Dendritic cell treated with granulocyte-macrophage colony-stimulating factor and Interleukin-4, amounts not matched to agents 40 ng/mL and 50 ng/mL, for 4 days (primary cell): ENCODE measurements at regions of chr14 and their contacts with region 1.

Region 1: DNA sequence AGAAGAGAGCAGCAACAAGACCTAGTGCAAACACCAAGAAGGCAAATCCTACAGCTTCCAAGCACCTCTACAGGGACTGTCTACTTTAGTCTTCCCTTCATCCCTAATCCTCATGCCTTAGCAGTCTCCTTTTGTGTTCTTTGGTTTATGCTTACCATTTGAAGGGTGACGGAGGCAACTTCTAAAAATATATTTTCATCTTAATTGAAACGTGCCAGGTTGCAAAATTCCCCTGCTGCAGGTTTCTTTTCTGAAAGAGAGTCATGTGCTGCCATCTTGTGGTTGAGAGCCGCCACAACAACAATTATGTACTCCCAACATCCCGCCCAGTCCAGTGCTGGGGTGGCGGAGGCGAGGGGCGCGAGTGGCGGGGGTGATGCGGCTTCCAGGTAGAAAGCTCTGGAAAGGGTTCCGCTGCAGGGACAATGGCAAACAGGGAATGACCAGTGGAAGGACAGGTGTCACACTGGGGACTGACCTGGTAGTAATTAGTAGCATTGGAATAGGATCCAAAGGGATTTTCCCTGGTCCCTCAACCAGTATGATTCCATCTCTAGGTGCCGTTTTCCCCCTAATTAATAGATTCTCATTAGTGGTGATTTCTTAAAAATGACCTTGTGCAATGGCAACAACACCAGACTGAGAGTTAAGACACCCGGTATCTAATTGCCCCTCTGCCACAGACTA is 80.3 kb upstream of the GNG2 start:
- H3K4me3 Mint-ChIP-seq: no peak overlapping the region
- H3K27ac Mint-ChIP-seq: no peak overlapping the region
- H3K4me1 Mint-ChIP-seq: peaks cover 24% of the 10 kb centered on the region
- H3K27me3 Mint-ChIP-seq: peaks cover 20% of the 10 kb centered on the region

Region 2: GRCh38 chr14:51283402-51284085 is 496.6 kb before region 1 on chr14:
- intact Hi-C with region 1: loop called (anchors 1 kb)
- H3K4me3 Mint-ChIP-seq: no peak overlapping the region
- H3K27ac Mint-ChIP-seq: no peak overlapping the region
- H3K4me1 Mint-ChIP-seq: no peaks in the 10 kb centered on the region
- H3K27me3 Mint-ChIP-seq: no peaks in the 10 kb centered on the region

Region 3: GRCh38 chr14:51369814-51370213 is 410.3 kb before region 1 on chr14:
- intact Hi-C with region 1: loop called (anchors 2 kb)
- H3K4me3 Mint-ChIP-seq: no peak overlapping the region
- H3K27ac Mint-ChIP-seq: no peak overlapping the region
- H3K4me1 Mint-ChIP-seq: no peaks in the 10 kb centered on the region
- H3K27me3 Mint-ChIP-seq: no peaks in the 10 kb centered on the region

Region 4: DNA sequence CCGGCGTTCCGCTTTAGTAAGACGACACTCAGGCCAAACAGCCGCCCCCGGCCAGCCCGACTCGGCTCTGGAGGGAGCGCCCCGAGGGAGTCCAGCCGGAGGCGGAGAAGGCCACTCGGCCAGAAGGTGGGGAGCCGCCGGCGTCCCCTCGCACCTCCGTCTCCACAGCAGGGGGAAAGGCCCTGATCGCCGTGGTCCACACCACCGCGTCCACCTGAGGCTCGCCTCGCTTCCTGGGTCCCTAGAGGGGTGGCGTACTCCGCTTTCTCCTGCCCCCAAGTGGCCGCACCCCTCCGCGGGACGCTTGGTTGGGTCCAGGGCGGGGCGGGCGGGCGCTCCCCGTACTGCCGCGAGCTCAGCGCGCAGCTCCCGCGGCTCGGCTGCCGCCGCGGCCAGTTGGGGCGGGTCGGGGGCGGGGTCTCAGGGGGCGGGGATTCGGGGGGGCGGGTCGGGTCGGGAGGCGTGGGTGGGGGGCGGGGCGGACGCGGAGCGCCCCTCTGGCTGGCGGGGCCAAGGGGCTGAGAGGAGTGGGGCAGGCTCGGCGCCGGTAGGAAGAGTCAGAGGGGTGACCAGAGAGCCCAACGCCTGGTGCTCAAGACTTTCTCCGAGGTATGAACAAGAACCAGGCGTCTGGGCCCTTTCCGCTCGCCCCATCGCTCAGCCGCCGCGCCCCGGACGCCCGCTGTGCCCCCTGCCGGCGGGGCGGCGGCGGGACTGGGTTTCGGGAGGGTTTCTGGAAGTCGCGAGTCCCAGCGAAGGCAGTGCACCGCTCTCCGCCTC is 128.6 kb before region 1 on chr14 and contains the start of gene FRMD6:
- intact Hi-C with region 1: loop called (anchors 5 kb)
- H3K4me3 Mint-ChIP-seq: peak within 1 kb of the TSS; percentile 87
- H3K27ac Mint-ChIP-seq: peak within 1 kb of the TSS; percentile 92
- H3K4me1 Mint-ChIP-seq: peaks cover 23% of the 10 kb centered on the region
- H3K27me3 Mint-ChIP-seq: peaks cover 24% of the 10 kb centered on the region

Region 5: DNA sequence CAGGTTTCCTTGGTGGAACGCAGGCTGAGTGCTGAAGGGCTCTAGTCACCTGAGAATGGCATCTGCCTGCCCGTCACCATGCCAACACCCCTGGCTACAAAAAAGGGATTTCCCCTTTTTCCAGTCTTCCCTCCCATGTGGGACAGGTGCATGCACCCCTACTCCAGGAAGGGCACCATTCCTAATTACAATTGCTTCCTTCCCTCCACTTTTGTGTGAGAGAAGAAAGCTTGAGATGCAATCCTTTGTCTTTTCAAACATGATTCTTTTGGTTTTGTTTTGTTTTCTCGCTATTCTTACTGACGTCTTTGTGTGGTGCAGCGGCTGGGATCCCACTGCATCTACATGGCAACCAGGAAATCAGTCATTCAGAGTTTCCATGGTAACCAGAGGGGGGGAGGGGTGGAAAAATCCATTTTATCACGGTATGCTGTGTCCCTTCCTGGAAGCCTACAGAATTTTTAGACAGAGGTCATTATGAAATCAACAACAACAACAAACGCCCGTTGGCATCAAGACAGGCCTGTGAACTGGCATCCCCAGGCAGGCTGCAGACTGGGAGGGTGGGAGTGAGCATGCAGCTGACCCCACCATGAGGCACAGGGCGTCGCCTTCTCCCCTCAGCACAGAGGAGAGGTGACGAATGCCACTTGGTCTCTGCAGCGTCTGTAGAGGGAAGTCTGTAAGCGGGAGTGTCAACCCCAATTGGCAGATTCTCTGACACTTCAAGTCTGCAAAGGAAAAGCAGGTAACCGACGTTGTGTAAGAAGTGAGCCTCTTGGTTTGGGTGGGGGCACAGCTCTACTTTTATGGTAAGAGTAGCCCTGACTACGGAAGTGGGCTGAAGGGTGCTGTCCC is 66.7 kb after region 1 on chr14:
- intact Hi-C with region 1: loop called (anchors 5 kb)
- H3K4me3 Mint-ChIP-seq: peak overlapping the region; percentile 75
- H3K27ac Mint-ChIP-seq: peak overlapping the region; percentile 93
- H3K4me1 Mint-ChIP-seq: peaks cover 62% of the 10 kb centered on the region
- H3K27me3 Mint-ChIP-seq: no peaks in the 10 kb centered on the region

Region 6: DNA sequence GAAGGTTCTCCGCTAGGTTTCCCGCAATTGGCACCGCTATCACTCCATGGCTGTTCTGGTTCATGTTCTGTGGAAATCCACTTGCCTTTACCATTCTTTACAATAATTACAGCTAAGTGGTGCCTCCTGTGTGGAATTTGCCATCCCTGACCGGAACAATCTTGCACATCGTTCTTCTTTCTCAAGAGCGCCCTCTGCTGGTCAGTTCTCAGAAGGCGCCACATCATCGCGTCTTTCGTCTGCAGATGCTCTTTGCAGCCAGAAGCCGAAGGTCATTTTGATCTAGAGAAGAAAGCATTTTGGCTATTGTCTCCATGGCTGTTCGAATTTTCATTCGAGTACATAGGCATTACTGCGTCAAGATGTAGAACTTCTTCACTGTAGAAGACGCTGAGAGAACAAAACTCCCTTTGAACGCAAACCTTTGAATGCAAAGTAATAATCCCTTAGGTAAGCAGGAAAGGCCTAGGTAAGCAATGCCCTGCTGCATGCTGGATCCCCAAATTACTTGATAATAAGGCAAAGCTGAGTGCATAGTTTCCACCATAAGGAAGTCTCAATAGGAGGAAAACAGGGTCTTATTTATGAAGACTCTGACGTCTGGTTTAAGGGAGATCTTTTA is 199.1 kb after region 1 on chr14:
- intact Hi-C with region 1: loop called (anchors 2 kb)
- H3K4me3 Mint-ChIP-seq: no peak overlapping the region
- H3K27ac Mint-ChIP-seq: no peak overlapping the region
- H3K4me1 Mint-ChIP-seq: no peaks in the 10 kb centered on the region
- H3K27me3 Mint-ChIP-seq: peaks cover 4% of the 10 kb centered on the region